ENCODE measurements at regions of chr7 and their contacts with region 1.

Region 1: GRCh38 chr7:48389977-48390376 is 218.7 kb downstream of the ABCA13 start:
- H3K4me3 Mint-ChIP-seq: peak overlapping the region; percentile 30
- H3K27ac Mint-ChIP-seq: peak overlapping the region; percentile 86
- H3K4me1 Mint-ChIP-seq: peaks cover 69% of the 10 kb centered on the region
- H3K27me3 Mint-ChIP-seq: peaks cover 19% of the 10 kb centered on the region

Region 2: DNA sequence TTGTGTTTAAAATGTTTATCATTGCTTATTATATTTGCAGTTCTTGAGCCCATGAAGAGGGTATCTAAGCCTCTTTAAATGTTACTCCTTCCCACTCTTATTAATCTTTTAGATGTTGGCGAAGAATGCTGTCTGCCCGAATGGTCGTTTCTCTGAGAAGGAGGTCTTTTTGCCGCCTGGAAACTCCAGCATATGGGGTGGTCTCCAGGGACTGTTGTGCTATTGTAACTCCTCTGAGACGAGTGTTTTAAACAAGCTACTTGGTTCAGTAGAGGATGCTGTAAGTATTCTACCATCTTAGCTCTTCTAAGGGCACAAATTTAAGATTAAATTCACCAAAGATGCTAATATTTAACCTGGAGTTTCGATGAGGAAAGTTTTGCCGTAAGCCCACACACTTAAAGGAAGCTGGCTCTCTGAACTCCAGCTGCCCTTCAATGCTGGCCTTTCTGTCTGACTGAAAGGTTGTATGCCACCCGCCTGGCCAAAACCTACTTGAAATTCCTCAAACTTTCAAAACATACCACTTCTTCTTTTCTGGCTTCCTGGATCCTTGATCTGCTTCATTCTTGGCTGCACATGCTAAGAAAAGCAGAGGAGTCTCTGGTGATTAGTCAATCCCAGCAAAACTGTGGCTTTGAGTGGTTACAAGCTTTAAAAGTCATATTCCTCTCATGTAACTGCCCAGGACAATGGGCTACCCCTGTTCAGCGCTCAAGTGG is 144.1 kb before region 1 on chr7:
- intact Hi-C with region 1: loop called (anchors 10 kb)
- H3K4me3 Mint-ChIP-seq: no peak overlapping the region
- H3K27ac Mint-ChIP-seq: no peak overlapping the region
- H3K4me1 Mint-ChIP-seq: peaks cover 62% of the 10 kb centered on the region
- H3K27me3 Mint-ChIP-seq: peaks cover 25% of the 10 kb centered on the region

Region 3: DNA sequence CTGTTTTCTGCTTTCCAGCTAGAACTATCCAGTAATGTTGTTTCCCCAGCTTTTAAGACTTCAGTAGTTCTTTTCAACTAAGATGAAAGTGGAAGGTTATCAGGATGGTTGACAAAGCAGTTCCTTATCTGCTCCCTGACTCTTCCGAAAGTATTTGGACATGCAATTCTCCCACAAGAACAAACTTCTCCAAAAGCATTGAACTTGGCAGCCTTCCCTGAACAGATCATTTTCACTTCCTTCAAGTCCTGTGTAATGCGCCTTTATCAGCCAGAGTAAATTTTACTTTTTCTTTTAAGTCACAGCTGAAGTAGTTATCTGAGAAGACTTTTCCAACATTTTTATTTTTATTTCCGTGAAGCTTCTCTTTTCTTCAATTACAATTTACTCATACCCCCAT is 574.1 kb after region 1 on chr7:
- intact Hi-C with region 1: loop called (anchors 5 kb)
- H3K4me3 Mint-ChIP-seq: peak overlapping the region; percentile 42
- H3K27ac Mint-ChIP-seq: peak overlapping the region; percentile 25
- H3K4me1 Mint-ChIP-seq: peaks cover 51% of the 10 kb centered on the region
- H3K27me3 Mint-ChIP-seq: peaks cover 5% of the 10 kb centered on the region

Region 4: DNA sequence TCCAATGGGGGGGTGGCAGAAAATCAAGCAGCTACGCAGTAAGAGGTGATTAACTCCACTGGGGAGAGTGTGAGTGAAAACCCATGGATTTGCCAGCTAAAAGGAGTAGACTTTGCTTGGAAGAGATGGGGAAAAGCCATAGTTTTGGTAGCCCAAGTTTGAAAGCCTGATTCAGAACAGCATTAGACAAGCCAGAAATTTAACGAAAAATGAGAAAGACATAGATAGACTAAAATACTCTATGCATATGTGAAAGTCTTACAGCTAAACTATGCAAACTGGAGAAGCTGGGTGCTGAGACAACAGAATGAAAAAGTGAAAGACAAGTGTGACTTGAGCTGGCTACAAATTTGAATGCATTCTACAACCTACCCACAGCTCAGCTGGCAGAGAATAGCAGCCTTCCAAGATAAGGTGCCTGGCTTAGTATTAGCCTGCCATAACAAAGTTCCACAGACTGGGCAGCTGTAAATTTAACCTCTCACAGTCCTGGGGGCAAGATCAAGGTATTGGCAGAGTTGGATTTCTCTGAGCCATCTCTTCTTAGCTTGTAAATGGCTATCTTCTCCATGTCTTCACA is 691.0 kb after region 1 on chr7:
- intact Hi-C with region 1: no loop called
- H3K4me3 Mint-ChIP-seq: no peak overlapping the region
- H3K27ac Mint-ChIP-seq: no peak overlapping the region
- H3K4me1 Mint-ChIP-seq: no peaks in the 10 kb centered on the region
- H3K27me3 Mint-ChIP-seq: no peaks in the 10 kb centered on the region

Measured in dendritic cell treated with granulocyte-macrophage colony-stimulating factor and Interleukin-4, amounts not matched to agents 40 ng/mL and 50 ng/mL, for 4 days (primary cell).